GM12878 (cell line): ENCODE measurements at regions of chr16 and their contacts with region 1.

Region 1: GRCh38 chr16:15888072-15888976 is at the start of gene CEP20:
- DNase-seq: peak; percentile 95
- ATAC-seq: peak; percentile 100
- H3K4me3 ChIP-seq: peak within 1 kb of the TSS; percentile 96
- H3K27ac ChIP-seq: peak within 1 kb of the TSS; percentile 87
- H3K4me1 ChIP-seq: peaks cover 10% of the 10 kb centered on the region
- H3K27me3 ChIP-seq: no peaks in the 10 kb centered on the region
- CTCF ChIP-seq: no peak
- EP300 ChIP-seq: no peak
- POLR2A ChIP-seq: peak; percentile 92
- RAD21 ChIP-seq: no peak
- polyA plus RNA-seq, gene CEP20: 52.2 to 55.2 TPM

Region 2: DNA sequence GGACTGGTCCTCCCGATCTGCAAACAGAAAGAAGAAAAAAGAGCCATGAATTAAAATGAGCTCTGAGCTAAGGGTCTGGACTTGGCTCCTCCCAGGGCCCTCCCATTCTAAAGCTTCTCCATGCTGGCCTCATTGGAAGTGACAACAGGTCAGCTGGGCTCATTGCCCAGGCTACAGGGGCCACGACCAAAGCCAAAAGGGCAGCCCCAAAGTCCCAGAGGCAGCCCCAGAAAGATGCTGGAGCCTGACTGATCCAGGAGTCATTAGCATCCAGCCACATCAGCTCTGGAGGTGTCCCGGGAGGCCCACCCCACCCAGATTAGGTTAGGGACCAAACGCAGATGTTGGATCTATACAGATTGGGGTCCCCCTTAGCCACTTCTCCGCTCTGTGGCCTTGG is 89.7 kb before region 1 on chr16:
- CTCF ChIA-PET with region 1: no interaction called
- POLR2A ChIA-PET with region 1: no interaction called
- RAD21 ChIA-PET with region 1: no interaction called
- SMC1A ChIA-PET with region 1: no interaction called
- in situ Hi-C with region 1: no loop called
- intact Hi-C with region 1: no loop called
- DNase-seq: no peak
- ATAC-seq: no peak
- H3K4me3 ChIP-seq: no peak overlapping the region
- H3K27ac ChIP-seq: no peak overlapping the region
- H3K4me1 ChIP-seq: no peaks in the 10 kb centered on the region
- H3K27me3 ChIP-seq: no peaks in the 10 kb centered on the region
- CTCF ChIP-seq: no peak
- EP300 ChIP-seq: no peak
- POLR2A ChIP-seq: no peak
- RAD21 ChIP-seq: no peak

Region 3: GRCh38 chr16:15874745-15875314 is 13.5 kb before region 1 on chr16:
- CTCF ChIA-PET with region 1: interaction called, 29 read pairs
- POLR2A ChIA-PET with region 1: interaction called, 7 read pairs
- RAD21 ChIA-PET with region 1: interaction called, 4 read pairs
- SMC1A ChIA-PET with region 1: interaction called, 32 read pairs
- in situ Hi-C with region 1: no loop called
- intact Hi-C with region 1: no loop called
- DNase-seq: no peak
- ATAC-seq: peak; percentile 65
- H3K4me3 ChIP-seq: no peak overlapping the region
- H3K27ac ChIP-seq: no peak overlapping the region
- H3K4me1 ChIP-seq: peaks cover 3% of the 10 kb centered on the region; the same call in 1 of the 2 replicates
- H3K27me3 ChIP-seq: no peaks in the 10 kb centered on the region
- CTCF ChIP-seq: peak; percentile 54 to 73 (median 61)
- EP300 ChIP-seq: no peak
- POLR2A ChIP-seq: no peak
- RAD21 ChIP-seq: peak; percentile 56

Region 4: DNA sequence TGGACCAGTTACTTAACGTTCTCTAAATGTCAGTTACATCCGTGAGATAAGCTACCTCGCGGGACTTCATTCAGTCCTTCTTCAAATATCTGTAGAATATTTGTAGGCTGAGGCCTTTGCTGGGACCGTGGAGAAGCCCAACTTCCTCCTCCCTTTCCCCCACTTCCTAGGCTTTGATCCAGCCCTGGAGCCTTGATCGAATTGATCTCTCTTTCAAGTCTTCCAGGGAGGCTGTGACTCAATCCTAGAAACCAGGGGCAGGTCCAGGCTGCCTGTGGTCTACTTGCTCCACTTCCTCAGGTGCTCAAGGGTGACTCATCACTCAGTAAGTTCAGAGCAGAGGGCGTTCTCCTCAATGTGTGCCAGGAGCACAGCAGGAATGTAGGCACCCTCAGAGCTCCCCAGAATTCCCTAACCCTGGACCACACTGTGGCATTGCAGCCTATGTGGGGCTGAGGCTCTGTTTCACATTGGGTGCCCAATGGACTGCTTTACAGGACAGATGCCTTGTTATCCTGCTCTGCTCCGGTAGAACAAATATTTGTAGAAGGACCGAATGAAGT is 11.3 kb after region 1 on chr16:
- CTCF ChIA-PET with region 1: interaction called, 4 read pairs
- POLR2A ChIA-PET with region 1: interaction called, 13 read pairs
- RAD21 ChIA-PET with region 1: interaction called, 6 read pairs
- SMC1A ChIA-PET with region 1: interaction called, 37 read pairs
- in situ Hi-C with region 1: no loop called
- intact Hi-C with region 1: no loop called
- DNase-seq: peak; percentile 65
- ATAC-seq: peak; percentile 84
- H3K4me3 ChIP-seq: no peak overlapping the region
- H3K27ac ChIP-seq: peak overlapping the region; percentile 41
- H3K4me1 ChIP-seq: peaks cover 37% of the 10 kb centered on the region
- H3K27me3 ChIP-seq: no peaks in the 10 kb centered on the region
- CTCF ChIP-seq: no peak
- EP300 ChIP-seq: 0 out of 4 replicates have a peak, but pooled peaks have one; percentile 15 to 49
- POLR2A ChIP-seq: no peak
- RAD21 ChIP-seq: no peak

Region 5: DNA sequence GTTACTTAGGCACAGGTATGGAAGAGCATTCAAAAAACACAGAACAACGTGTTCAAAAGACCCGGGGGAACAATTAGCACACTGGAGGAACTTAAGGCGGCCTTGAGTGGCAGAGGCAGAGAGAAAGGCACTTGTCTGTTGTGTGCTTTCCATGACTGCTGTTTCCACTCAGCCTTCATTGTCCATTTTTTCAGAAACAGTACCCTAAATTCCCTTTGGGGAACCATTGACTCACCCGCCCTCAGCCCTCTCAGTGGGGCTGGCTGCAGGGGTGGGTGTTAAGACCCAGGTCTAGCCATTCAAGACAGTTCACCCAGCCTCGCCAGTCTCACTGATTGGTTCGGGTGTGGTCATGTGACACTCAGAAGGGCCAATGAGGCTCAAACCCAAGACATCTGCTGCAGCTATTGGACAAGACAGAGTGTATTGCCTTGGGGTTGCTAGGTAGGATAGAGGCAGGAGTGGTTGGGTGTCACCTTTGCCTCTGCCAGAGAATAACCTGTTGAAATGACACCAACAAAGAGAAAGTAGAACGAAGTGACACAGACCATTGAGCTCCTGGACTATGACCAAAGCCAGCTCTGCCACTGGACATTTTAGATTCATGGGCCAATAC is 19.6 kb after region 1 on chr16:
- CTCF ChIA-PET with region 1: interaction called, 4 read pairs
- POLR2A ChIA-PET with region 1: interaction called, 18 read pairs
- RAD21 ChIA-PET with region 1: interaction called, 13 read pairs
- SMC1A ChIA-PET with region 1: interaction called, 6 read pairs
- in situ Hi-C with region 1: no loop called
- intact Hi-C with region 1: no loop called
- DNase-seq: peak; percentile 97
- ATAC-seq: peak; percentile 100
- H3K4me3 ChIP-seq: no peak overlapping the region
- H3K27ac ChIP-seq: no peak overlapping the region
- H3K4me1 ChIP-seq: no peaks in the 10 kb centered on the region
- H3K27me3 ChIP-seq: no peaks in the 10 kb centered on the region
- CTCF ChIP-seq: no peak
- EP300 ChIP-seq: no peak
- POLR2A ChIP-seq: no peak
- RAD21 ChIP-seq: no peak

Region 6: GRCh38 chr16:15949210-15950160 is 61.2 kb after region 1 on chr16 and contains the start of gene ABCC1:
- CTCF ChIA-PET with region 1: interaction called, 3 read pairs
- POLR2A ChIA-PET with region 1: interaction called, 7 read pairs
- RAD21 ChIA-PET with region 1: interaction called, 28 read pairs
- SMC1A ChIA-PET with region 1: interaction called, 18 read pairs
- in situ Hi-C with region 1: no loop called
- intact Hi-C with region 1: loop called (anchors 5 kb)
- DNase-seq: no peak
- ATAC-seq: peak; percentile 71
- H3K4me3 ChIP-seq: peak within 1 kb of the TSS; percentile 89
- H3K27ac ChIP-seq: peak within 1 kb of the TSS; percentile 88
- H3K4me1 ChIP-seq: peaks cover 16% of the 10 kb centered on the region
- H3K27me3 ChIP-seq: no peaks in the 10 kb centered on the region
- CTCF ChIP-seq: no peak; a peak in 1 of 6 replicates
- EP300 ChIP-seq: no peak
- POLR2A ChIP-seq: peak; percentile 48; the same call in 1 of the 2 replicates
- RAD21 ChIP-seq: no peak
- polyA plus RNA-seq, gene ABCC1: 3.2 to 4.8 TPM

Region 7: GRCh38 chr16:16007743-16008111 is 119.4 kb after region 1 on chr16:
- CTCF ChIA-PET with region 1: no interaction called
- POLR2A ChIA-PET with region 1: interaction called, 8 read pairs
- RAD21 ChIA-PET with region 1: interaction called, 5 read pairs
- SMC1A ChIA-PET with region 1: interaction called, 11 read pairs
- in situ Hi-C with region 1: no loop called
- intact Hi-C with region 1: no loop called
- DNase-seq: peak; percentile 85
- ATAC-seq: peak; percentile 89
- H3K4me3 ChIP-seq: peak overlapping the region; percentile 34; the same call in 1 of the 2 replicates
- H3K27ac ChIP-seq: peak overlapping the region; percentile 79
- H3K4me1 ChIP-seq: peaks cover 26% of the 10 kb centered on the region
- H3K27me3 ChIP-seq: no peaks in the 10 kb centered on the region
- CTCF ChIP-seq: no peak
- EP300 ChIP-seq: peak; percentile 48 to 80; a peak in 2 of 4 replicates
- POLR2A ChIP-seq: peak; percentile 68
- RAD21 ChIP-seq: 0 out of 2 replicates have a peak, but pooled peaks have one; percentile 16

Region 8: GRCh38 chr16:16033208-16033717 is 144.9 kb after region 1 on chr16:
- CTCF ChIA-PET with region 1: no interaction called
- POLR2A ChIA-PET with region 1: interaction called, 3 read pairs
- RAD21 ChIA-PET with region 1: interaction called, 3 read pairs
- SMC1A ChIA-PET with region 1: interaction called, 7 read pairs
- in situ Hi-C with region 1: no loop called
- intact Hi-C with region 1: loop called (anchors 10 kb)
- DNase-seq: no peak
- ATAC-seq: peak; percentile 46; the same call in 2 of the 3 replicates
- H3K4me3 ChIP-seq: no peak overlapping the region
- H3K27ac ChIP-seq: peak overlapping the region; percentile 33
- H3K4me1 ChIP-seq: peaks cover 10% of the 10 kb centered on the region
- H3K27me3 ChIP-seq: no peaks in the 10 kb centered on the region
- CTCF ChIP-seq: peak in 1 of 3 experiments; percentile 11; a peak in 1 of 6 replicates
- EP300 ChIP-seq: no peak
- POLR2A ChIP-seq: no peak
- RAD21 ChIP-seq: peak; percentile 33; the same call in 1 of the 2 replicates